ENCODE measurements at regions of chr3 and their contacts with region 1.

Region 1: GRCh38 chr3:156554842-156555687 is at the start of gene SSR3:
- DNase-seq: peak; percentile 96

Region 2: GRCh38 chr3:156037356-156037755 is 517.7 kb before region 1 on chr3:
- CTCF ChIA-PET with region 1: no interaction called
- POLR2A ChIA-PET with region 1: no interaction called
- DNase-seq: no peak

Region 3: DNA sequence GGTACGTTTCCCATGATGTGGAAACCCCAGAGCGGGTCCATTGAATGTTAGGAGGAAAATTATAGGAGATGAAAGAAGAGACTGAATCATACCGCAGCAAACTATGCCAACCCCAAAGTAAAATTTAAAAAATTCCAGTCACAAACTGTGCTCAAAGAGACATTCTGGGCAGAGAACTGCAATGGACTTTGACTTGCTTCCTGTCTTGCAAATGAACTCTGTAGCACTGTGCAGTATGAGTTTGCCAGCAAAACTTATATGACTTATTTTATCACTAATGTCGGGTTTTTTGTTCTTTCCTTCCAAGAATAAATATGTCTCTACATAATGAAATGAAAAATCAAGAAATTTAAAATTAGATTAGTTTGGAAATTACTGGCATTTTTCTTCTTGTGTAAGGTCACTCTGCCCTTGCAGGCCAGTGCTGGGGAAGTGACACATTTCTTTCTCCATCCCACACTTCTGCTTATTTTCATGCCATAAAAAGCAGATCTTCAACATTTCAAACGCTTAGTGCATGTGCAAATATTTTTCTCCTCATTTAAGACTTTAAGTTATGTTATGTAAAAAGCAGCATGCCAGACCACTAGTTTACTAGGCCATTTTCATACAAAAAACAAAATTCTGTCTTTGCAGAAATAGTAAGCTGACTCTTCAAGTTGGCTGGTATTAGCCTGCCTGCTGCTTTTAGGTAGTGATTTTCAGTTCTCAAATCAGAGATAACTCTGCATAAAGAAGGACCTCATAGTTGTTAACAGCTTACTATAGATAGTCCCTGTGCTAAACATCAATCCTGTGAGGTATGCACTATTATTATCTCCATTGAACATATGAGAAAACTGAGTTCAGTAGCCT is 32.1 kb after region 1 on chr3:
- CTCF ChIA-PET with region 1: no interaction called
- POLR2A ChIA-PET with region 1: no interaction called
- DNase-seq: no peak

Region 4: GRCh38 chr3:156674046-156674910 is 119.2 kb after region 1 on chr3 and contains the start of gene TIPARP:
- CTCF ChIA-PET with region 1: interaction called, 3 read pairs
- POLR2A ChIA-PET with region 1: interaction called, 19 read pairs
- DNase-seq: peak; percentile 94